ENCODE measurements at regions of chr4 and their contacts with region 1.

Region 1: DNA sequence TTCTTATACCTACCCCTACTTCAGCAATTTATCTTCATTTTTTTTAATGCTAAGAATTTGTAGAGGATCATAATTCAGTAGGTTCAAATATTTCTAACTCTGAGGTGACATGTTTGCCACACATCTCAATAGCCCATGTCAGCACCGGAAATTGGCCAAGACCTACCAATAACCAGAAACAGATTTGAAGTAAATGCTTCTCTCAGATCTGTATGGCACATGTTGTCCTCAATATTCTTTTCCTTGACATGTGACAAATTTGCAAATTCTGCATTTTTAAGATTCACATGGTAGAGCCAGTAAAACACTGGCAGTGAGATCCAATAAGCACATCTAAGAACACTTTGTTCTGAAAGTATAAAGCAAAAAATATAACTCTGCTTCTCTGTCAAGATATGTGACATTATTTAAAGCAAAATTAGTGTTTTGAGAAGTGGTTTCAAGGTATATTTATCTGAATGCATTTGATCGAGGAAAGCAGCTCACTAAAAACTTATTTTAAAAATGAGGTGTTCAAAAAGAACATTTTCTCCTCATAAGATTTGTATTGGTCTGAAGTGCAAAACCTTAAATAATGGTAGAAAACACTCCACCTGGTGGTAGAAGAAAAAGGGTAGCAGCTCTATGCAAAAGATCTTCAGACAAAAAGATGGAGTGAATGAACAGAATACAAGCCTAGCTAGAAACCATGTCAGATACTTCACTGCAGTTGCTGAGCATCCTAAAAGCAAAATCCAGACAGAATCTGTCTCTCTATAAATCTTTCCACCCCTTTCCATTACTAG is 513.8 kb upstream of the FAM241A start:
- DNase-seq: no peak
- H3K4me3 Mint-ChIP-seq: no peak overlapping the region
- H3K27ac Mint-ChIP-seq: no peak overlapping the region
- H3K4me1 Mint-ChIP-seq: no peaks in the 10 kb centered on the region
- H3K27me3 Mint-ChIP-seq: no peaks in the 10 kb centered on the region

Region 2: GRCh38 chr4:109998867-109999584 is 1632.4 kb before region 1 on chr4:
- intact Hi-C with region 1: loop called (anchors 5 kb)
- DNase-seq: peak; percentile 14
- H3K4me3 Mint-ChIP-seq: no peak overlapping the region
- H3K27ac Mint-ChIP-seq: no peak overlapping the region
- H3K4me1 Mint-ChIP-seq: peaks cover 18% of the 10 kb centered on the region
- H3K27me3 Mint-ChIP-seq: peaks cover 4% of the 10 kb centered on the region

Region 3: GRCh38 chr4:110631584-110632505 is 999.6 kb before region 1 on chr4:
- intact Hi-C with region 1: loop called (anchors 5 kb)
- DNase-seq: no peak
- H3K4me3 Mint-ChIP-seq: peak overlapping the region; percentile 2
- H3K27ac Mint-ChIP-seq: peak overlapping the region; percentile 57
- H3K4me1 Mint-ChIP-seq: peaks cover 5% of the 10 kb centered on the region
- H3K27me3 Mint-ChIP-seq: peaks cover 80% of the 10 kb centered on the region

Region 4: GRCh38 chr4:111717921-111718320 is 86.5 kb after region 1 on chr4:
- intact Hi-C with region 1: no loop called
- DNase-seq: no peak
- H3K4me3 Mint-ChIP-seq: no peak overlapping the region
- H3K27ac Mint-ChIP-seq: no peak overlapping the region
- H3K4me1 Mint-ChIP-seq: no peaks in the 10 kb centered on the region
- H3K27me3 Mint-ChIP-seq: no peaks in the 10 kb centered on the region

Measured in activated T-helper 1 cell treated with anti-CD3 and anti-CD28 coated beads, Interleukin-12 subunit alpha, Interleukin-12 subunit beta, Interleukin-2, Interleukin-4 antibody, amounts not matched to agents 30 ng/mL and 10 ng/mL and 1 ng/mL, durations not matched to agents 14 hours and 24 hours and 36 hours (primary cell).